ENCODE measurements at regions of chr5 and their contacts with region 1.

Region 1: DNA sequence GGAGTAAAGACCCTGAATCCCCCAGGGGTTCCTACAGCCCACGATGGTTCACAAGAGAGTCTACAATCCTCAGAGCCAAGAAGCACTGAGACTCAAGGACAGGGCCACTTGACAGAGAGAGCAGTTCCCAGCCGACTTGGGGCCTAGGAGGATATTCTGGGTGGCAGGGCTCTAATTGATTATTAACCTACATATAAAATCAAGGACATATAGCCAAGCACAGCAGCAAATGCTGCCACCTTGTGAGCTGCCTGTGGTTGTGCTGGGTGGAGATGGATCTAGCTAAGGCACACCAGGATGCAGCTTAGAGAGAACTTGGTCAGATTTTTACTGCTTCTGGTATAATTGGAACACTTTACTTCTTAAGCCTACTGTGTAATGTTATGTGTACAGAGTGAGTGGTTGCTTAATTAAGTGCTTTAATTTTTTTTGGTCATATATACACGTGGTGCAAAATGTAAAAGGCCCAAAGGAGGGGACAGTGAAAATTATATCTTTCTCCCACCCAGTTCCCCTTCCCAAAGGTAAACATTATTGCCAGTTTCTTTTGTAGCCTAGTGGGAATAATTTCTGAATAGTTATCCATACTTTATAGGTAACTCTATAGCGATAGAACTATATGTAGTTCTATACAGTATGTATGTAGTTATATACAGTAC is 78.8 kb downstream of the F2RL2 start:
- DNase-seq: peak; percentile 85
- H3K4me3 Mint-ChIP-seq: peak overlapping the region; percentile 87
- H3K27ac Mint-ChIP-seq: peak overlapping the region; percentile 98
- H3K4me1 Mint-ChIP-seq: peaks cover 83% of the 10 kb centered on the region
- H3K27me3 Mint-ChIP-seq: no peaks in the 10 kb centered on the region

Region 2: GRCh38 chr5:75566710-75567309 is 977.6 kb before region 1 on chr5:
- intact Hi-C with region 1: loop called (anchors 2 kb)
- DNase-seq: peak; percentile 83
- H3K4me3 Mint-ChIP-seq: peak overlapping the region; percentile 84
- H3K27ac Mint-ChIP-seq: peak overlapping the region; percentile 98
- H3K4me1 Mint-ChIP-seq: peaks cover 39% of the 10 kb centered on the region
- H3K27me3 Mint-ChIP-seq: peaks cover 2% of the 10 kb centered on the region

Region 3: DNA sequence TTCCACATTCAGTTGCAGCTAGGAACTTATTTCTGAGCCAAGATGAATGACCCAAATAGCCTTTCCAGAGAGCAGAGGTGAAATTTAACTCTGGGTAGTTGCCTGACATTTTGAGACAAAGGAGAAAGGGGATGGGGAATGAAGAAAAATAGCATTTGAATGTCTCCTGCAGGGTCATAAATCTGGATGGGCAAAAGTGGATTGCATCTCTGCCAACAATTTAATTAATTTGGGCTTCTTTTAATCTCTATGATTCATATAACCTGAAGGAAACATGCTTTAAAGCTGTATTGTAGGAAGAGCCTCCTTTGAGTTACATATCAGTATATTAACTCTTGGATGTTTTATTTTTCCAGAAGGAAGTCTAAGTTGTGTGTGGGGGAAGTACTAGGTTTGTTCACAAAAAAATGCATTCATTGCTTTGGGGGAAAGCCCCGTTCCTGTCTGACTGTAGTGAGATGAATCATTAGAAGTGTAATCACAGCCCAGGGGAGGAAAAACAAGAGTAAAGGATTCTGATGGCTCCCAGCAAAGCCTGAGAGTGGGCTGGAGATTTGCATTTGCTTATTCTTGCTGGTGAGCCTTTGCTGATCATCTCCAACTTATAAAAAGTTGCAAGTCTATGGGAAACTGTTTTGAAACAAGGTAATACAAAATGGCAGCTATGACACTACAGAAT is 274.3 kb before region 1 on chr5:
- intact Hi-C with region 1: loop called (anchors 1 kb)
- DNase-seq: peak; percentile 77
- H3K4me3 Mint-ChIP-seq: peak overlapping the region; percentile 83
- H3K27ac Mint-ChIP-seq: peak overlapping the region; percentile 95
- H3K4me1 Mint-ChIP-seq: peaks cover 41% of the 10 kb centered on the region
- H3K27me3 Mint-ChIP-seq: no peaks in the 10 kb centered on the region

Region 4: GRCh38 chr5:76367623-76368371 is 176.6 kb before region 1 on chr5:
- intact Hi-C with region 1: loop called (anchors 1 kb)
- DNase-seq: peak; percentile 68
- H3K4me3 Mint-ChIP-seq: no peak overlapping the region
- H3K27ac Mint-ChIP-seq: peak overlapping the region; percentile 84
- H3K4me1 Mint-ChIP-seq: peaks cover 24% of the 10 kb centered on the region
- H3K27me3 Mint-ChIP-seq: no peaks in the 10 kb centered on the region

Region 5: DNA sequence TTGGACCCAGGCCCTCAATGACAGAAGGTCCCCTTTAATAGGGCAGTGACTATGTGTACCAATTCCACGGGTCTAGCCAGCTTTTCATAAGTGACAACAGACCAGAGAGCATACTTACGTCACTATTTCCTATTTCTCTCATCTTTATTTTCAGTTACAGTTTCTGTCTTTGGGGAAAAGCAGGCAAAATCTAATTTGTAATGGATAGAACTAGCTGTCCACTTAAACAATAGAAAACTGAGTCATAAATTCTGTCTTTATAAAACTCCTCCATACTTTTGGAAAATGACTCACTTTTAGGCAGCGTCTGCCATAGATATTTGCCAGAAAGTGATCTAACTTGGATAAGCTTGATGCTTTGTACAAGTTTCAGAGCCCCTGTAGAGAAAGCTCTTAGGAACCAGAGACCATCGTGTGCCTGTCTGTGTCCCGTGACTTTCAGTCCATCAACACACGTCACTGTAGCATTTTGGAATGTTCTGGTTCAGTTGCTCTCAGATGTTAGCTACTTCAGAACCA is 23.1 kb before region 1 on chr5:
- intact Hi-C with region 1: loop called (anchors 1 kb)
- DNase-seq: peak; percentile 65
- H3K4me3 Mint-ChIP-seq: peak overlapping the region; percentile 77
- H3K27ac Mint-ChIP-seq: peak overlapping the region; percentile 96
- H3K4me1 Mint-ChIP-seq: peaks cover 37% of the 10 kb centered on the region
- H3K27me3 Mint-ChIP-seq: no peaks in the 10 kb centered on the region

Region 6: DNA sequence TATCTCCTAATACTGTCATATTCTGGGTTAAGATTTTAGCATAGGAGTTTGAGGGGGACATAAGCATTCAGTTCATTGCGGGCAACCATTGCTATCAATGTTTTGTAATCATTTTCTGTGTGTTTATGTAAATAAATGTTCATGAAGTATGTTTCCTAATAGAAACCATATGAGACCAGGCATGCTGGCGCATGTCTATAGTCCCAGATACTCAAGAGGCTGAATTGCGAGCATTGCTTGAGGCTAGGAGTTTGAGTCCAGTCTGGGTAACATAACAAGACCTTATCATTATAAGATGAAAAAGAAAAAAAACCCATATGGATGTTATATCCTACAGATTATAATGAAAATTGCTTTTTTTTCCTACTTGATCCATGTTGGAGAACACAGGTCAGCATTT is 12.3 kb before region 1 on chr5:
- intact Hi-C with region 1: no loop called
- DNase-seq: no peak
- H3K4me3 Mint-ChIP-seq: no peak overlapping the region
- H3K27ac Mint-ChIP-seq: no peak overlapping the region
- H3K4me1 Mint-ChIP-seq: peaks cover 39% of the 10 kb centered on the region
- H3K27me3 Mint-ChIP-seq: no peaks in the 10 kb centered on the region

Region 7: DNA sequence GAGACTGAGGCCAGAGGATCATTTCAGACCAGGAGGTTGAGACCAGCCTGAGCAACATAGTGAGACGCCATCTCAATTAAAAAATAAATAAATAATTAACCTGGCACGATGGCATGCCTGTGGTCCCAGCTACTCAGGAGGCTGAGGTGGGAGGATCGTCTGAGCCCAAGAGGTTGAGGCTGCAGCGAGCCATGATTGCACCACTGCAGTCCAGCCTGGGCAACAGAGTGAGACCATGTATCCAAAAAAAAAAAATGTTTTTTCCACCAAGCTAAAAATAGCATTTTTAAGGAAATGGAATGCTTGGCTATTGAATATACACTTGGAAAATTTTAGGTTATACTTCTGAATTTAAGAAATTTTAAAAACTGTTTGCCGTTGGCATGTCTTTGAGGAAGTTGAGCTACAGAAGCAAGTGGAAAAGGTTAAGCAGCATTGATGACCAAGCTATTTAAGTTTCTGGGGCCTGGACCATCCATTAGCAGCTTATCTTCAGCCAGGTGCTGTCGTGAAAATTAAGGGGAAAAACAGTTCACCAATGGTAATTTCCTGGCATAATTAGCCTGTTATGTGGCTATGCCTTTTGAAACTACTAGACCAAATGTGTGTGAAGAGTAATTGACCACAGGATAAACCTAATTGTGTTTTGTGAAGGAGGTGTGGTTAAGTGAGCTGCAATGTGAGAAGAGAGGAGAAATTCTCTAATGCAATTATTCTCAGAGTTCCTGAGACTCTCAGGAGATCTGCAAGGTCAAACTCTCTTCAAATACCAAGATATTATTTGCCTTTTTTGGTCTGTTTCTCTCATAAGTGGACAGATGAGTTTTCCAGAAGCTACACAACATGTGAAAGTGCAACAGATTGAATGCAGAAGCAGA is 192.5 kb after region 1 on chr5:
- intact Hi-C with region 1: loop called (anchors 2 kb)
- DNase-seq: no peak
- H3K4me3 Mint-ChIP-seq: peak overlapping the region; percentile 17
- H3K27ac Mint-ChIP-seq: peak overlapping the region; percentile 46
- H3K4me1 Mint-ChIP-seq: peaks cover 29% of the 10 kb centered on the region
- H3K27me3 Mint-ChIP-seq: no peaks in the 10 kb centered on the region

Measured in activated CD4-positive, alpha-beta T cell treated with anti-CD3 and anti-CD28 coated beads, Interleukin-2, amount 10 ng/mL, durations not matched to agents 24 days and 14 days (primary cell).